Activated T-helper 1 cell treated with anti-CD3 and anti-CD28 coated beads, Interleukin-12 subunit alpha, Interleukin-12 subunit beta, Interleukin-2, Interleukin-4 antibody, amounts not matched to agents 30 ng/mL and 10 ng/mL and 1 ng/mL, durations not matched to agents 14 hours and 24 hours and 36 hours (primary cell): ENCODE measurements at regions of chr7 and their contacts with region 1.

Region 1: DNA sequence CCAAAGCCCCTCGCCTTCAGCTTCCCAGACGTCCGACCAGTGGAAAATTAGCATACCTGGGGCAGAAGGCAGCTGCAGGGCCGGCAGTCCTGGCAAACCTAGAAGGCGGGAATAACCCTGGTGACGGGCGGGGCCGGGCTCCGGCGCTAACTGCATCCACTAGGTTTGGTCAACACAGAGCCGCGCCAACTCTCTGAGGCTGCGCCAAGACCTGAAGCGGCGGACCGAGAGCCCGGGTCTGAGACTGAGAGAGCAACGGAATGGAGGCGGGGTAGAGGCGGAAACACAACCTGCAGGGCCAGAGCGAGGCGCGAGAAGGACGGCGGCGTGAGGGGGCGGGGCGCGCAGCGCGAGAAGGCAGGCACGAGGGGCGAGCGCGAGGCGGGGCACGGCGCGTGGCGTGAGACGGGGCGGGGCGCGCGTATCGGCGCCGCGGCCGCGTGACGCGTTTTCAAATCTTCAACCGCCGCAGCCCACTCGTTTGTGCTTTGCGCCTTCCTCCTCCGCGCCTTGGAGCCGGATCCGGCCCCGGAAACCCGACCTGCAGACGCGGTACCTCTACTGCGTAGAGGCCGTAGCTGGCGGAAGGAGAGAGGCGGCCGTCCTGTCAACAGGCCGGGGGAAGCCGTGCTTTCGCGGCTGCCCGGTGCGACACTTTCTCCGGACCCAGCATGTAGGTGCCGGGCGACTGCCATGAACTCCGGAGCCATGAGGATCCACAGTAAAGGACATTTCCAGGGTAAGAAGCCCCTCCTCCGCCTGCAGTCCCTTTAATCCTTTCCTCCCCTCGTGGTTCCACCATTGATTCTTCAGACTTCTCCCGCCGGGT is at the starts of genes DBF4 and SLC25A40:
- DNase-seq: peak; percentile 95
- H3K4me3 Mint-ChIP-seq: peak within 1 kb of the TSS; percentile 80
- H3K27ac Mint-ChIP-seq: peak within 1 kb of the TSS; percentile 98
- H3K4me1 Mint-ChIP-seq: peaks cover 54% of the 10 kb centered on the region
- H3K27me3 Mint-ChIP-seq: no peaks in the 10 kb centered on the region
- total RNA-seq, gene DBF4: 68.6 and 76.6 TPM in 2 replicates
- total RNA-seq, gene SLC25A40: 41.9 and 51.4 TPM in 2 replicates

Region 2: DNA sequence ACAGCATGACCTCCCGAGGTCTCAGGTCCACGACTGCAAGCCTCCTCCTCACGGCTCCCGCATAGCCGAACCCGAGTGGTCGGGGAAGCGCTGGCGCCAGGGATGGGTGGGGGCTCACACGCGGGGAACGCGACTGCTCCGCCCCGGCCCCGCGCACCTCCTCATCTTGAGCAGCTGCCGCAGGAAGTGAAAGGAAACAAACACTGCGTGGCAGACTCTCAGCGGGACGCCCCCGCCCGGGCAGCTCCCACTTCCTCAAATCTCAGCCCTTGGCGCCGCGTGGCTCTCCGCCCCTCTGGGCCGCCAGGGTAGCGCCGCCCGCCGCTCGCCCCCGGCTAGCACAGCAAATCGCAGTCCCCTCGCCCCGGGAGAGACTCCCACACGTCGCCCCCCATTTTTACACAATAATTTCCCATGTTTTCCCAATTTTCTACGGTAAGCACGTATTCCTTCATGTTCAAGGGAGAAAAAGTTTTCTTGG is 656.7 kb before region 1 on chr7 and contains the start of gene TMEM243:
- intact Hi-C with region 1: loop called (anchors 1 kb)
- DNase-seq: peak; percentile 79
- H3K4me3 Mint-ChIP-seq: peak within 1 kb of the TSS; percentile 100
- H3K27ac Mint-ChIP-seq: peak within 1 kb of the TSS; percentile 96
- H3K4me1 Mint-ChIP-seq: peaks cover 45% of the 10 kb centered on the region
- H3K27me3 Mint-ChIP-seq: peaks cover 11% of the 10 kb centered on the region
- total RNA-seq, gene TMEM243: 49.2 and 50.5 TPM in 2 replicates

Region 3: GRCh38 chr7:87628780-87629569 is 247.3 kb before region 1 on chr7:
- intact Hi-C with region 1: loop called (anchors 1 kb)
- DNase-seq: no peak
- H3K4me3 Mint-ChIP-seq: peak overlapping the region; percentile 72
- H3K27ac Mint-ChIP-seq: no peak overlapping the region
- H3K4me1 Mint-ChIP-seq: peaks cover 6% of the 10 kb centered on the region
- H3K27me3 Mint-ChIP-seq: peaks cover 29% of the 10 kb centered on the region

Region 4: GRCh38 chr7:87886875-87887274 is 10.6 kb after region 1 on chr7:
- intact Hi-C with region 1: loop called (anchors 1 kb)
- DNase-seq: no peak
- H3K4me3 Mint-ChIP-seq: no peak overlapping the region
- H3K27ac Mint-ChIP-seq: no peak overlapping the region
- H3K4me1 Mint-ChIP-seq: peaks cover 24% of the 10 kb centered on the region
- H3K27me3 Mint-ChIP-seq: no peaks in the 10 kb centered on the region

Region 5: GRCh38 chr7:88219781-88220747 is 343.8 kb after region 1 on chr7 and contains the start of gene SRI:
- intact Hi-C with region 1: loop called (anchors 1 kb)
- DNase-seq: peak; percentile 87
- H3K4me3 Mint-ChIP-seq: peak within 1 kb of the TSS; percentile 93
- H3K27ac Mint-ChIP-seq: peak within 1 kb of the TSS; percentile 95
- H3K4me1 Mint-ChIP-seq: peaks cover 43% of the 10 kb centered on the region
- H3K27me3 Mint-ChIP-seq: peaks cover 5% of the 10 kb centered on the region
- total RNA-seq, gene SRI: 173 and 185 TPM in 2 replicates

Region 6: GRCh38 chr7:88771417-88771816 is 895.2 kb after region 1 on chr7:
- intact Hi-C with region 1: no loop called
- DNase-seq: no peak
- H3K4me3 Mint-ChIP-seq: no peak overlapping the region
- H3K27ac Mint-ChIP-seq: no peak overlapping the region
- H3K4me1 Mint-ChIP-seq: no peaks in the 10 kb centered on the region
- H3K27me3 Mint-ChIP-seq: peaks cover 7% of the 10 kb centered on the region